A549 (cell line): ENCODE measurements at regions of chr2 and their contacts with region 1.

Region 1: DNA sequence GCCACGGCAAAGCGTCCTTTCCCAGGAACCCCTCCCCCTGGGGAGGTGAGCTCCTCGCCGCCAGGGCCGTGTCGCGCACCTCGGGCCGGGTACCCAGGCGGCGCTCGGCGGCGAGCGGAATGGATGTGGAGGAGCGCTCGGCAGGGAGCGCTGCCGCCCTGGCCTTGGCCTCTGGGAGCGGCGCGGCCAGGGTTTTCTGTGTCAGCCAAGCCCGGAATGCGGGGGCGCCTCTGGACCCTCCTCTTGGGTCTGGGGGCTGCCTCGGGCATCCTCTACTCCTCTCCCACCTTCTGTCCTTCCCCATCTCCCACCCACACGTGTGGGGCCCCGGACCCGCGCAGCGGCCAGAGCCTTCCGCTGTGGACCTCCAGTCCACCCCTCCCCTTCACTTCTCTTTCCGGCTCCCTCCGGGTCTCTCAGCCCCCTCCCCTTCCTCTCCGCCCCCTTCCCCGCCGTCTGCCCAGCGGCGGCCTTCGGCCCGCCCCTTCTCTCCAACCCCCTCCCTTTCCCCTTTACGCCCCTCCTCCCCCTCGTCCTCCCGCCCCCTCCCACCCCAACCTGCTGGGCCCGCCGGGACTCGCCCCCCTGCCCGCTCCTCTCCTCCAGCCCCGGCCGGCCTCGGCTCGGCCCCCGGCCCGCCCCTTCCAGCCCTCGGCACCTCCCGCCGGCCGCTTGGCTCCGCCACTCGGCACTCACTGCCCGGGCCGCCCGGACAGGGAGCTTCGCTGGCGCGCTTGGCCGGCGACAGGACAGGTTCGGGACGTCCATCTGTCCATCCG is at the start of gene MERTK:
- DNase-seq: peak; percentile 82 to 87
- ATAC-seq: peak; percentile 90 to 93
- H3K4me3 ChIP-seq: peak within 1 kb of the TSS; percentile 86
- H3K27ac ChIP-seq: peak within 1 kb of the TSS; percentile 80 to 93
- H3K4me1 ChIP-seq: peaks cover 4% of the 10 kb centered on the region; the same call in 2 of the 3 replicates
- CTCF ChIP-seq: peak; percentile 58
- EP300 ChIP-seq: no peak
- POLR2A ChIP-seq: peak; percentile 96
- RAD21 ChIP-seq: peak; percentile 48 to 72
- polyA plus RNA-seq, gene MERTK: 4.0 and 4.4 TPM in 2 replicates

Region 2: DNA sequence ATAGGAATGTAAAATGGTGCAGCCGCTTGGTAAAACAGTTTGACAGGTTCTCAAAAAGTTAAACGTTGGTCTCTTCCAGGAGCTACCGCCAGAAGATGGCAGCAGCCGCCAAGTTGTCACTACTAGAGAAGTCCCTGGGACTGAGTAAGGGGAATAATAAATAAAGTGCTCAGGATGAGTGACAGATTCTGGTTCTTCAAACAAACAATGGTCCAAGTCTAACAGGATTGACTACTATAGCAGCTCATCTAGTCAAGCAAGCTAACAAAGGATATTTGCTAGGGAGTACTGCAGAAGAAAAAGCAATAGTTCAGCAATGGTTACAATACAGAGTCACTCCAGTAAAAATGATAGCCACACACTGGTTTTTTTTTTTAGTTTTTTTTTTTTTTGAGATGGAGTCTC is 10.3 kb before region 1 on chr2:
- CTCF ChIA-PET with region 1: interaction called, 32 read pairs
- POLR2A ChIA-PET with region 1: interaction called, 3 read pairs
- DNase-seq: peak; percentile 56 to 75
- ATAC-seq: peak; percentile 38 to 55; a peak in 3 of 6 replicates
- H3K4me3 ChIP-seq: no peak overlapping the region
- H3K27ac ChIP-seq: no peak overlapping the region
- H3K4me1 ChIP-seq: peaks cover 3% of the 10 kb centered on the region; the same call in 2 of the 3 replicates
- CTCF ChIP-seq: peak; percentile 91
- EP300 ChIP-seq: no peak
- POLR2A ChIP-seq: no peak
- RAD21 ChIP-seq: peak; percentile 89 to 90

Region 3: GRCh38 chr2:111912547-111912946 is 14.4 kb after region 1 on chr2:
- CTCF ChIA-PET with region 1: interaction called, 14 read pairs
- POLR2A ChIA-PET with region 1: no interaction called
- DNase-seq: no peak
- ATAC-seq: no peak; a peak in 1 of 6 replicates
- H3K4me3 ChIP-seq: no peak overlapping the region
- H3K27ac ChIP-seq: no peak overlapping the region
- H3K4me1 ChIP-seq: no peaks in the 10 kb centered on the region; the same call in 2 of the 3 replicates
- CTCF ChIP-seq: no peak
- EP300 ChIP-seq: no peak
- POLR2A ChIP-seq: no peak
- RAD21 ChIP-seq: no peak

Region 4: GRCh38 chr2:111957872-111958354 is 59.8 kb after region 1 on chr2:
- CTCF ChIA-PET with region 1: no interaction called
- POLR2A ChIA-PET with region 1: no interaction called
- DNase-seq: no peak
- ATAC-seq: no peak
- H3K4me3 ChIP-seq: no peak overlapping the region
- H3K27ac ChIP-seq: peak overlapping the region in 1 of 2 experiments; percentile 4; a peak in 1 of 6 replicates
- H3K4me1 ChIP-seq: no peaks in the 10 kb centered on the region
- CTCF ChIP-seq: no peak
- EP300 ChIP-seq: no peak
- POLR2A ChIP-seq: no peak
- RAD21 ChIP-seq: no peak

Region 5: DNA sequence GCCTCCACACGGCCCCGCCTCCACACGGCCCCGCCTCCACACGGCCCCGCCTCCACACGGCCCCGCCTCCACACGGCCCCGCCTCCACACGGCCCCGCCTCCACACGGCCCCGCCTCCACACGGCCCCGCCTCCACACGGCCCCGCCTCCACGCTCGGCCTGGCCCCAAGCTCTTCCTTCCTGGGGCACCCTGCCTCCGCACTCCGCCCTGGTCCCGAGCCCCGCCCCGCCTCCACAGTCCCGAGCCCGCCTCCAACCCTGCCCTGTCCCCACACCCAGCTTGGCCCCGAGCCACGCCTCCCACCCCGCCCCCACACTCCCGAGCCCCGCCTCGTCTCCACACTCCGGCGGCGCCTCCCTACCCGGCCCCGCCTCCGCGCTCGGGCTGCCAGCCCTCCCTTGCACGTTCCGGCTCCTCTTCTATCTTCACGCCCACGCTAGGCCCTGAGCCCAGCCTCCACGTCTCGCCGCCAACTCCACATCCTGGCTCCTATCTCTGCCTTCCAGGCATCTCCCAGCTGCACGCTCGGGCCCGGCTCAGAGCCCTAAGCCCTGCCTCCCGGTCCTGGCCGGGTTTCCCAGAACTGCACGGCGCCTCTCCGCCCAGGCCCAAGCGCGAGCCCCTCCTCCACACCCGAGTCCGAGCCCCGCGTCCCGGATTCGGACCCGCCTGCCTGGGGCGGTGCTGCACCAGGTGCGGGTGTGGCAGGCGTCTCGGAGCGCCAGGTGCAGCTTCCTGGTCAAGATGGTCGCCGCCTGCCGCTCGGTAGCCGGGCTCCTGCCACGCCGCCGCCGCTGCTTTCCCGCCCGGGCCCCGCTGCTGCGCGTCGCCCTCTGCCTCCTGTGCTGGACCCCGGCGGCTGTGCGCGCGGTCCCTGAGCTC is 157.0 kb after region 1 on chr2 and contains the start of gene TMEM87B:
- CTCF ChIA-PET with region 1: interaction called, 336 read pairs
- POLR2A ChIA-PET with region 1: interaction called, 7 read pairs
- DNase-seq: peak; percentile 66 to 97
- ATAC-seq: peak; percentile 74 to 87
- H3K4me3 ChIP-seq: peak within 1 kb of the TSS; percentile 73
- H3K27ac ChIP-seq: peak within 1 kb of the TSS; percentile 76 to 90
- H3K4me1 ChIP-seq: peaks cover 16% of the 10 kb centered on the region
- CTCF ChIP-seq: no peak
- EP300 ChIP-seq: no peak
- POLR2A ChIP-seq: peak; percentile 56
- RAD21 ChIP-seq: no peak
- polyA plus RNA-seq, gene TMEM87B: 18.8 and 27.0 TPM in 2 replicates